ENCODE measurements at regions of chr17 and their contacts with region 1.

Region 1: DNA sequence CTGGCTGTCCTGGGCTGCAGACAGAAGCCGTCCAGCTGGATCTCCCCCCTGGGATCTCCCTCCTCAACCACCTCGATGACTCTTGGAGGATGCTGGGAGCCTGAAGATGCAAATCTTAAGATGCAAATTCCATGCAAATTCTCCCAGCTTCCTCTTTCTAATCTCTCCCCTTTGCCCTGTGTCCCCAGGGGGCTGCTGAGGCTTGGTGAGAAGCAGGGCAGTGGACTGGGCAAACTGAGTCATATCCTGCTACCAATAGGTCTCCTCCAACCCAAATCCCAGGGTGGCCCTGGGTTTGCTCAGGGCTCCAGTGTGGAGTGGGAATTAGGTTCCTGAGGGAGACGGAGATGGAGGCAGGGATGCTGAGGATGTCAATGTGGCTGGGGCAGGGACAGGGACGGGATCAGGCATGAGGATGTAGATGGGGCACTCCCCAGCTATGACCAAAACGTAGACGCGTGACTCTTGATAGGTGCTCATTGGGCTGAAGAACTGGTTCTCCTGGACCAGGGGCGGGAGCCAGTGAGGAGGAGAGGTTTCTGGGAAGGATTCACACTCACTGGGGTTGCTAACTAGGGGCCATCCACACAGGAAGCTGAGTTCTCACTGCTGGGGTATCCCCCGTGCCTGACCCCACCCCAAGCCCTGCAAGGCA is 3.6 kb upstream of the ALOX12B start:
- DNase-seq: no peak
- H3K4me3 ChIP-seq: no peak overlapping the region
- H3K4me3 Mint-ChIP-seq: peak overlapping the region in 1 of 8 donors; percentile 26
- H3K27ac ChIP-seq: no peak overlapping the region
- H3K27ac Mint-ChIP-seq: no peak overlapping the region
- H3K4me1 ChIP-seq: peaks cover 12% of the 10 kb centered on the region
- H3K4me1 Mint-ChIP-seq: peaks cover 5 to 16% (median 12%) of the 10 kb centered on the region in 4 donors
- H3K27me3 ChIP-seq: no peaks in the 10 kb centered on the region
- H3K27me3 Mint-ChIP-seq: peaks cover 17 to 21% of the 10 kb centered on the region in 2 donors

Region 2: DNA sequence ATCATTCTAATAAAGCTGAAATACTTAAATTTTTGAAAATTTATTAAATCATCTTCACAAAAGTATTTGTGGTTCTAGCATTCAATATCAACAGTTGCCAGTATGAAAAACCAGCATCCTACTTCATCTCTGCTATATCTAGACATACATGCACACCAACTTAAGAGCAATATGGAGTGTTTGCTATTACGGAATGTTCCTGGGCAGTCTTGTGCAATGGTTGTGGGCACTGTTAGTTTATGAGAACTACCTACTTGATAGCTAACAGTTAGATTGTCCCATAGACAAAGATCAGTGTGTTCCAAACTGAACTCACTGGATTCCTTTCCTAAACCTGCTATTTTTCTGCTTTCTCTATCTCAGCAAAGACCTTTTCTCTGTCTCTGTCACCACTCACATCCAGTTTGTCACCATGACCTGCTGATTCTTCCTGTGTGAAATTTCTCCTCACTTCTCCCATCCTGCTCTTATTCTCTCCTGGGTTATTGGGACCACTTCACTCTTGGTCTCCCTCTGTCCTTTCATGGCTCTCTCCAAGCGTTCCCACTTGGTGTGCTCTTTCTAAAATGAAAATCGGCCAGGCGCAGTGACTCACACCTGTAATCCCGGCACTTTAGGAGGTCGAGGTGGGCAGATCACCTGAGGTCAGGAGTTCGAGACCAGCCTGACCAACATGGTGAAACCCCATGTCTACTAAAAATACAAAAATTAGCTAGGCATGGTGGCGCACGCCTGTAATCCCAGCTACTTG is 131.5 kb before region 1 on chr17:
- CTCF ChIA-PET with region 1: no interaction called
- POLR2A ChIA-PET with region 1: no interaction called
- intact Hi-C with region 1: no loop called
- DNase-seq: no peak
- H3K4me3 ChIP-seq: no peak overlapping the region
- H3K4me3 Mint-ChIP-seq: no peak overlapping the region
- H3K27ac ChIP-seq: no peak overlapping the region
- H3K27ac Mint-ChIP-seq: no peak overlapping the region
- H3K4me1 ChIP-seq: no peaks in the 10 kb centered on the region
- H3K4me1 Mint-ChIP-seq: no peaks in the 10 kb centered on the region
- H3K27me3 ChIP-seq: no peaks in the 10 kb centered on the region
- H3K27me3 Mint-ChIP-seq: peaks cover 0 to 6% of the 10 kb centered on the region in 2 donors

Region 3: DNA sequence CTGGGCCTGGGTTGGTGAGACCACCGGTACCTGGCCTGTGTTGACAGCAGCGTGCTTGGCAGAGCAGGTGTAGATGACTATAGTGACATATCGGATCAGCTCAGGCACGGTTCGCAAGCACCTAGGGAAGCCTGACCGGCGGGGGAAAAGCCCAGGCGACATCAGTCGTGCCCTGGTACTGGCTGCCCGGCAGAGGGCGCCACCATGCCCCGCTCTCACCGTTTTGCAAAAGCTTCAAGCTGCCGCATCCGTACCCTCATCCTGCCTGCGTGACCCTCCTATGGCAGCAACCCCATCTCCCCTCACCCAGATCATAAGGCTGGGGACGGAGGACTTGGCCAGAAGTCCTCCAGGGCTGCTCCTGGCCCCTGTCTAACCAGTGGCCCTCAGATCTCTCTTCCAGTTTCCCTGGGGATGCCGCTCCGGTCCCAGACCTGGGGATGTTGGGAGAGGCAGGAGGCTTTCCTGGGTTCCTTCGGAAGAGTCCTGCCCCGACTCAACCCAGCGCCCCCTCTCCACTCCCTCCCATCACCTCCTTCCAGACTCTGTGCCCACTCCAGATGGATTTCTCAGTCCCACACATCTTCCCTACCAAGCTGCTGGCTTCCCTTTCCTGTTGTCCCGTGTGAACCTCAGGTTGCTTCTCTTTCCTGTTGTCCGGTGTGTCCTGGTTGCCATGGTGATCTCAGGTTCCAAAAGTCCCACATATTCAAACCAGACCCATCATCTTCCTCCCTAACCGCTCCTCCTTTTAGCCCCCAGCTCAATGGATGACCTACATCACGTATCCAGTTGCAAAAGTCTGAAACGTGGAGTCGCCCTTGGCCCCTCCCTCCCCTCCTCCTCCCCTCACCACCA is 17.3 kb before region 1 on chr17:
- CTCF ChIA-PET with region 1: interaction called, 48 read pairs
- POLR2A ChIA-PET with region 1: interaction called, 3 read pairs
- intact Hi-C with region 1: loop called (anchors 2 kb)
- DNase-seq: peak; percentile 77 to 88 (median 82)
- H3K4me3 ChIP-seq: peak overlapping the region in 1 of 2 donors; percentile 33
- H3K4me3 Mint-ChIP-seq: peak overlapping the region; percentile 74 to 97 (median 86)
- H3K27ac ChIP-seq: no peak overlapping the region
- H3K27ac Mint-ChIP-seq: peak overlapping the region in 6 of 7 donors; percentile 37 to 92 (median 82)
- H3K4me1 ChIP-seq: peaks cover 27% of the 10 kb centered on the region
- H3K4me1 Mint-ChIP-seq: peaks cover 15 to 29% (median 23%) of the 10 kb centered on the region in 4 donors
- H3K27me3 ChIP-seq: peaks cover 24% of the 10 kb centered on the region
- H3K27me3 Mint-ChIP-seq: peaks cover 12 to 18% of the 10 kb centered on the region in 2 donors

Region 4: DNA sequence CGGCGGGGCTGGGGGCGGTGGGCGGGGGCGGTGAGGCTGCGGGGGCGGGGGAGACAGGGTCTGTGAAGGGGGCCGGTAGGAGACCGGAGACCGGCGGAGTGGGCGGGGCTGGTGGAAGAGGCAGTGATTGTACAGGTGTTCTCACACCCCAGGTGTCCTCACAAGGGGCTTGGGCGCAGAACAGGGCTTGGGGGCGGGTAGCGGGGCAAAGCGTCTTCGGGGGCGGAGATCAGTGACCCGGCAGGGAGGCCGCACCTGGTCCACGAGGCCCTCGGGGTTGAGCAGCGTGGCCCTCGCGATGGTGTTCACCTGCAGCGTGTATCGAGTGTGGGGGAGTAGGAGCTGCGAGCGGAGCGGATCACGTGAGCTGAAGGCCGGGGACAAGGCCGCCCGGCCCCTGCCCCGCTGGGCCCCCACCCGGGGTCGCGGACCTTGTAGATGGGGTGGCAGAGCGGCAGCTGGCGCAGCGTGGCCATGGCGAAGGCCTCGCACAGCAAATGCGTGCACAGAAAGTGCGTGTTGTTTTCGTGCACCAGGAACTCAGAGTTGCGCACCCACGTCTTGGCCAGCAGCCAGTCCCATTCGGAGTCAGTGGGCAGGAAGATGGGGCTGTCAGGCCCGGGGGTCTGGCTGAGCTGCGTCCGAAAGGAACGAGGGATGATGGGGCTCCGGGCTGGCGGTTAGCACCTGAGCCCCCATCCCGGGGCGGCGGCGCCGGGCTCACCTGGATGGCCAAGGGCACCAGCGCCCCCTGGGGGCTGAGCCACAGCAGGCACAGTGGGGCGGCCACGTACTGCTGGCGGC is 18.7 kb after region 1 on chr17:
- CTCF ChIA-PET with region 1: interaction called, 178 read pairs
- POLR2A ChIA-PET with region 1: interaction called, 16 read pairs
- intact Hi-C with region 1: loop called (anchors 1 kb)
- DNase-seq: peak; percentile 78 to 86 (median 82)
- H3K4me3 ChIP-seq: peak overlapping the region; percentile 66 to 84
- H3K4me3 Mint-ChIP-seq: peak overlapping the region; percentile 42 to 78 (median 72)
- H3K27ac ChIP-seq: no peak overlapping the region
- H3K27ac Mint-ChIP-seq: no peak overlapping the region
- H3K4me1 ChIP-seq: peaks cover 5% of the 10 kb centered on the region
- H3K4me1 Mint-ChIP-seq: peaks cover 0 to 5% (median 2%) of the 10 kb centered on the region in 4 donors
- H3K27me3 ChIP-seq: peaks cover 26% of the 10 kb centered on the region
- H3K27me3 Mint-ChIP-seq: peaks cover 15 to 22% of the 10 kb centered on the region in 2 donors

Region 5: GRCh38 chr17:8156246-8156992 is 65.3 kb after region 1 on chr17:
- CTCF ChIA-PET with region 1: interaction called, 10 read pairs
- POLR2A ChIA-PET with region 1: interaction called, 4 read pairs
- intact Hi-C with region 1: no loop called
- DNase-seq: peak; percentile 100
- H3K4me3 ChIP-seq: peak overlapping the region; percentile 90
- H3K4me3 Mint-ChIP-seq: no peak overlapping the region
- H3K27ac ChIP-seq: peak overlapping the region; percentile 100
- H3K27ac Mint-ChIP-seq: no peak overlapping the region
- H3K4me1 ChIP-seq: peaks cover 85% of the 10 kb centered on the region
- H3K4me1 Mint-ChIP-seq: peaks cover 38 to 71% (median 55%) of the 10 kb centered on the region in 4 donors
- H3K27me3 ChIP-seq: no peaks in the 10 kb centered on the region
- H3K27me3 Mint-ChIP-seq: no peaks in the 10 kb centered on the region

Region 6: GRCh38 chr17:8300627-8301242 is 209.6 kb after region 1 on chr17:
- CTCF ChIA-PET with region 1: interaction called, 41 read pairs
- POLR2A ChIA-PET with region 1: interaction called, 4 read pairs
- intact Hi-C with region 1: loop called (anchors 1 kb)
- DNase-seq: peak; percentile 62 to 76 (median 72)
- H3K4me3 ChIP-seq: no peak overlapping the region
- H3K4me3 Mint-ChIP-seq: peak overlapping the region in 2 of 8 donors; percentile 2
- H3K27ac ChIP-seq: no peak overlapping the region
- H3K27ac Mint-ChIP-seq: peak overlapping the region in 6 of 7 donors; percentile 47 to 90 (median 83)
- H3K4me1 ChIP-seq: peaks cover 7% of the 10 kb centered on the region
- H3K4me1 Mint-ChIP-seq: peaks cover 7 to 16% (median 11%) of the 10 kb centered on the region in 4 donors
- H3K27me3 ChIP-seq: no peaks in the 10 kb centered on the region
- H3K27me3 Mint-ChIP-seq: peaks cover 0 to 1% of the 10 kb centered on the region in 2 donors

Measured in CD4-positive, alpha-beta memory T cell (primary cell).